Upper lobe of right lung (tissue), 1 donor: ENCODE measurements at regions of chr19 and their contacts with region 1.

Region 1: GRCh38 chr19:44770550-44771257 is 7.0 kb upstream of the CBLC start:
- DNase-seq: peak; percentile 97
- ATAC-seq: peak; percentile 100
- H3K4me3 ChIP-seq: no peak overlapping the region
- H3K27ac ChIP-seq: no peak overlapping the region
- H3K4me1 ChIP-seq: no peaks in the 10 kb centered on the region
- H3K27me3 ChIP-seq: no peaks in the 10 kb centered on the region
- CTCF ChIP-seq: peak; percentile 86

Region 2: DNA sequence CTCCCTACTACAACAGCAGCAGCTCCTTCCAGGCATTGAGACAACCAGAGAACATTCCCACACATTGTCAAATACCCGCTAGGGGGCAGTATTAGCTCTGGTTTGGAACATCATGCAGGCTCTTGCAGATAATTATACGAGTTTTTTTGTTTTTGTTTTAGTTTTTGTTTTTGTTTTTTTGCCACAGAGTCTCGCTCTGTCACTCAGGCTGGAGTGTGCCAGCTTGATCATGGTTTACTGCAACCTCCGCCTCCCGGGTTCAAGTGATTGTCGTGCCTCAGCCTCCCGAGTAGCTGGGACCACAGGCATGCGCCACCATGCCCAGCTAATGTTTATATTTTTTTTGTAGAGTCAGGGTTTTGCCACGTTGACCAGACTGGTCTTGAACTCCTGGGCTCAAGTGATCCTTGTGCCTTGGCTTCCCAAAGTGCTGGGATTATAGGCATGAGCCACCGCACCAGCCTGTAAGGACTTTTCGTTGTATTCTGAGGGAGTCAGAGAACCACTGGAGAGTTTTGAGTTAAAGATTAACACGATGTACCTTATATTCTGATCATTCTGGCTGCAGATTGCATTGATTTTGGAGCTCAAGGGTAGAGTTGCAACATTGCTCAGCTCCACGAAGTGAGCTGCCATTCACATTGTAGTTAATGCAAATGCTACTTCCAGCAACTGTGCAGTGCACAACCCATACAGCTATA is 199.6 kb before region 1 on chr19:
- intact Hi-C with region 1: loop called (anchors 5 kb)
- DNase-seq: no peak
- ATAC-seq: peak; percentile 90
- H3K4me3 ChIP-seq: no peak overlapping the region
- H3K27ac ChIP-seq: no peak overlapping the region
- H3K4me1 ChIP-seq: no peaks in the 10 kb centered on the region
- H3K27me3 ChIP-seq: peaks cover 8% of the 10 kb centered on the region
- CTCF ChIP-seq: peak; percentile 81

Region 3: DNA sequence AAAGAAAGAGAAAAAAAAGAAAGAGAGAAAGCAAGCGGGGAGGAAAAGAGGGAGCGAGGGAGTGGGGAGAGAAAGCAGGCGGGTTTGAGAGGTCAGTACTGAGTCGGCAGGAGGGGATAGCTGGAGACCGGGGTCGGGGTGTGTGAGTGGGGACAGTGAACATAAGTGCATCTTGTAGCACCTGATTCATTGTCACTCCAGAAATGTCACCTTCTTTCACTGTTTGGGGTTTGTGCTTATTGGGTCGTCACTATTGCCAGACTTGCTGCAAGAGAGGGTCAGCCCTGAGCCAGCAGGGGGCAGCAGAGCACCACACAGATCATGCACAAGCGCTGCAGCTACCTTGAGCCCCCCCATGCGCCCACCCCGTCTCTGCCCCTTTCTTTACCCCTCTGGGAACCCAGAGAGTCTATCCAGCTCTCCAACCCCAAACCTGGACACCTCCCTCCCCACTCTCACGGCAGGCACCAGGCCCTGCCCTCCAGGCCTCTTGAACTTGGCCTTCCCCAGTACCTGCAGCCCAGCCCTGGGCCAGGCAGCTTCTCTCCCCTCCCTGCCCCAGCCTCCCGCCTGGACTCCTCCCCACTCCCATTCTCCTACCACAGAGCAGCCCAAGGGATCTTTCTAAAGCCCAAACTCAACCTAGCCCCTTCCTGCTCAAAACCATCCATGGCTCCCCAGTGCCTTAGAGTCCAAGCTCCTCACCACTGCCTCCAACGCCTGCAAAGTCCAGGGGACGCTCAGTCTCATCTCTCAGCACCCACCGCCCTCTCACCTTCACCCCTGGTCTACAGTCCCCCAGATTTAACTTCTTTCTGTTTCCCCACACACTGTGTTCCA is 81.4 kb before region 1 on chr19:
- intact Hi-C with region 1: loop called (anchors 5 kb)
- DNase-seq: peak; percentile 90
- ATAC-seq: peak; percentile 73
- H3K4me3 ChIP-seq: no peak overlapping the region
- H3K27ac ChIP-seq: peak overlapping the region; percentile 3
- H3K4me1 ChIP-seq: peaks cover 56% of the 10 kb centered on the region
- H3K27me3 ChIP-seq: no peaks in the 10 kb centered on the region
- CTCF ChIP-seq: peak; percentile 94

Region 4: GRCh38 chr19:44723952-44724319 is 46.8 kb before region 1 on chr19:
- intact Hi-C with region 1: loop called (anchors 5 kb)
- DNase-seq: peak; percentile 89
- ATAC-seq: peak; percentile 93
- H3K4me3 ChIP-seq: no peak overlapping the region
- H3K27ac ChIP-seq: no peak overlapping the region
- H3K4me1 ChIP-seq: peaks cover 52% of the 10 kb centered on the region
- H3K27me3 ChIP-seq: no peaks in the 10 kb centered on the region
- CTCF ChIP-seq: peak; percentile 98